Activated CD4-positive, alpha-beta T cell treated with anti-CD3 and anti-CD28 coated beads for 36 hours (primary cell): ENCODE measurements at regions of chr4 and their contacts with region 1.

Region 1: DNA sequence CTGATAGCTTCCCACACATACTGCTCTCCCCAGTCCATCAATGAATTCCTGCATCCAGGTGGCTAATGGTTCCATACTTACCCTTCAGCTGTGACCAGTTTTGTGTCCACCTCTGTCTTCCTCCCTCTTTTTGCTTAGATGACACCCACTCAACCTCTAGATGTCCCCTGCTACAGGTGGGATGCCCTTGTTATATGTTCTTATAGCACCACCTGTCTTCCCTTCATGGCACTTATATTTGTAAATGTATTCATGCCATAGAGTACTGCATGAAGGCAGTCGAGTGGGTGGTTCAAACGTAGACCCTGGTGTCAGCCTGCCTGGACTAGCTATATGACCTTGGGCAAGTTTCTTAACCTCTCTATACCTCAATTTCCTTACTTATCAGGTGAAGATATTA is 6.5 kb upstream of the USP46 start:
- DNase-seq: peak; percentile 10
- ATAC-seq: peak; percentile 71
- H3K4me3 Mint-ChIP-seq: no peak overlapping the region
- H3K27ac Mint-ChIP-seq: no peak overlapping the region
- H3K4me1 Mint-ChIP-seq: peaks cover 2% of the 10 kb centered on the region
- H3K27me3 Mint-ChIP-seq: peaks cover 19% of the 10 kb centered on the region

Region 2: DNA sequence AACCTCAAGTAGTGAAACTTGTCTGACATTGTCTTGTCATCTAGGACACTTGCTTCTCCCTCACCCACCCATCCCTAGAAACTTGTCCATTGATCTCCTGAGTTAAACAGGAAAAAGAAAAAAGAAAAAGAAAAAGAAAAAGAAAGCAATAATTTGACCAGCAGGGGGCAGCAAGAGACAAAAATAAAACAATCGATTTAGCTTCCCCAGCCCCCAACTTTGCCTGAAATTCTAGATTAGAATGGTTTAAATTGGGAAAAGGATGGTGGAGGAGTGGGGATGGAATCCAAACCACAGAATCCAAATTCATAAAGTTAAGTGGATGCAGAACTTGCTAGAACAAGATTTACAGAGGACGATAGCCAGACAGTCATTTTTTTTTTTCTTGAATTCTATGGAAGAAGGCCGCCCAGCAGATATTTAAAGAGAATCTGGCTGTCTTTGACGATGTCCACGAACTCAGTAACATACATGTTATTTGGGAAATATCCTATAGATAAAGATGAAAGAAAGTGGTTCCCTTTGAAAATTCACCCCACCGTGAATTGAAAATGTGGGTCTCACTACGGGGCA is 289.4 kb before region 1 on chr4:
- CTCF ChIA-PET with region 1: interaction called, 3 read pairs
- POLR2A ChIA-PET with region 1: no interaction called
- intact Hi-C with region 1: loop called (anchors 1 to 5 kb)
- DNase-seq: peak; percentile 13
- ATAC-seq: no peak
- H3K4me3 Mint-ChIP-seq: no peak overlapping the region
- H3K27ac Mint-ChIP-seq: no peak overlapping the region
- H3K4me1 Mint-ChIP-seq: no peaks in the 10 kb centered on the region
- H3K27me3 Mint-ChIP-seq: peaks cover 13% of the 10 kb centered on the region

Region 3: DNA sequence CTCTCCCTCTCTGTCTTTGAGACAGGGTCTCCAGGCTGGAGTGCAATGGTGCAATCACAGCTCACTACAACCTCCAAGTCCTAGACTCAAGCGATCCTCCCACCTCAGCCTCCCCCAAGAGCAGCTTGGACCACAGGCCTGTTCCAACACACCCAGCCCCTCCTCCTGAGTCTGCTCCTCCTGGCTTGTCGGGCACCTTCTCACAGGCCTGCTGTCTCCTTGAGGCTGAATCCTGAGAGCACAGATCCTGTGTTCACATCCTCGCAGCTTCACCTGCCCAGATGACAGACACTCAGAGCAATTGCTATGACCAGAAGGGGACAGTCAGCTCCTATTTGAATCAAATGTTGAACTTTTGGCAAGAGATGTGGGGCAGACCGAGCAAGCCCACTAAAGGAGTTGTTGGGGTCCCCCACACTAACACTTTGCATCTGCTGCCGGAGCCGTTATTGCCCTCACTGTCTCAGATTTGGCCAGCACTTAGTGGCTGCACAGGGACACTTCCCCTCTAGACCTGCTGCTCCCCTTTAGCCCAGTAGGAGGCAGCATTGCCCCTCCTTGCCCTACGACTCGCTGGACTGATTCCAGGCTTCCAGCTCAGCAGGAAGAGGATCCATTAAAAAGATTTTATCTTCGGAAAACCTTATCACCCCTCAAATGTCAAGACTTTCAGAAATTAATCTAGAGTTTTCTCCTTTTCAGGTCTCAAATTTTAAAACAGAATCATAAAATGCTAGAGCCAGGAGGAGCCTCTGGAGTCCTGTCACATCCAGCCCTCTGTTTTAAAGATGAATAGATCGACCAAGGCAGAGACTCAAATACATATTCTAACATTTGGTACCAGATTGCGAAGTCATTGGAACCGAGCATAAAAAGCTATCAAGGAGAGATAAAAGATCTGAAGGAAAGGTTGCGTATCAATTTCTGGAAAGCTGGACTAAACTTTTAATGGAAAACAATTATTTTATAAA is 120.2 kb before region 1 on chr4:
- CTCF ChIA-PET with region 1: interaction called, 8 read pairs
- POLR2A ChIA-PET with region 1: no interaction called
- intact Hi-C with region 1: loop called (anchors 2 kb)
- DNase-seq: peak; percentile 76
- ATAC-seq: peak; percentile 61
- H3K4me3 Mint-ChIP-seq: no peak overlapping the region
- H3K27ac Mint-ChIP-seq: no peak overlapping the region
- H3K4me1 Mint-ChIP-seq: peaks cover 2% of the 10 kb centered on the region
- H3K27me3 Mint-ChIP-seq: peaks cover 2% of the 10 kb centered on the region

Region 4: GRCh38 chr4:52588097-52588782 is 77.4 kb before region 1 on chr4:
- CTCF ChIA-PET with region 1: interaction called, 3 read pairs
- POLR2A ChIA-PET with region 1: no interaction called
- intact Hi-C with region 1: loop called in 1 of 2 experiments (anchors 2 kb)
- DNase-seq: peak; percentile 42
- ATAC-seq: peak; percentile 49
- H3K4me3 Mint-ChIP-seq: no peak overlapping the region
- H3K27ac Mint-ChIP-seq: no peak overlapping the region
- H3K4me1 Mint-ChIP-seq: peaks cover 15% of the 10 kb centered on the region
- H3K27me3 Mint-ChIP-seq: no peaks in the 10 kb centered on the region

Region 5: GRCh38 chr4:52883707-52884676 is 218.4 kb after region 1 on chr4:
- CTCF ChIA-PET with region 1: no interaction called
- POLR2A ChIA-PET with region 1: interaction called, 10 read pairs
- intact Hi-C with region 1: no loop called
- DNase-seq: no peak
- ATAC-seq: no peak
- H3K4me3 Mint-ChIP-seq: no peak overlapping the region
- H3K27ac Mint-ChIP-seq: no peak overlapping the region
- H3K4me1 Mint-ChIP-seq: no peaks in the 10 kb centered on the region
- H3K27me3 Mint-ChIP-seq: no peaks in the 10 kb centered on the region